AG04450 (cell line): ENCODE measurements at regions of chr16 and their contacts with region 1.

Region 1: GRCh38 chr16:57416122-57416509 is 11.5 kb downstream of the CCL17 start:
- DNase-seq: no peak
- H3K4me3 ChIP-seq: no peak overlapping the region
- H3K27ac ChIP-seq: no peak overlapping the region
- H3K27me3 ChIP-seq: peaks cover 18% of the 10 kb centered on the region
- CTCF ChIP-seq: no peak

Region 2: DNA sequence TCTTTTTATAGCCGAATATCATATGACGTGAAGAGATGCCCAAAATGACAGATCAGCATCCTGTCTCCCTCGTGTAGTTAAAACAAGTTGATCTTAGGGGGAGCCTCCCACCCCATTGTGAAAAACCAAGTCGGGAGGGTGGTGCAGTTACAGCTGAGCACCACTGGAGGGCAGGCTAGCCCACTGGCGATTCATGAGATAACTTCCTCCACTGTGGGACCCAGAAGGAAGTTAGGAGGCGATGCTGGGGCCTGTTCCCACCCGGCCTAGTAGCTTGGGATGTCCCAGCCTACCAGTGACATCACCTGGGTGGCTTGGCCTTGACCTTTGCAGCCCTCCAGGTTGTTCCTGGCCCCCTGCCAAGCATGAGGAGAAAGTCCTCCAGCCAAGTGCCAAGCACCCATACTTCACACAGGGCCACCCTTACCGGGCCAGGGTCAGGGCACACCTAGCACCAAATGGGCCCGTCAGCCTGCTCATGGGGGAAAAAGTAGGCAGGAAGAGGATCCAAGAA is 331.8 kb before region 1 on chr16:
- CTCF ChIA-PET with region 1: interaction called, 12 read pairs
- POLR2A ChIA-PET with region 1: no interaction called
- DNase-seq: peak; percentile 32
- H3K4me3 ChIP-seq: no peak overlapping the region
- H3K27ac ChIP-seq: no peak overlapping the region
- H3K27me3 ChIP-seq: no peaks in the 10 kb centered on the region
- CTCF ChIP-seq: peak; percentile 99

Region 3: GRCh38 chr16:57289391-57290257 is 126.5 kb before region 1 on chr16:
- CTCF ChIA-PET with region 1: interaction called, 16 read pairs
- POLR2A ChIA-PET with region 1: no interaction called
- DNase-seq: no peak
- H3K4me3 ChIP-seq: no peak overlapping the region
- H3K27ac ChIP-seq: no peak overlapping the region
- H3K27me3 ChIP-seq: peaks cover 12% of the 10 kb centered on the region
- CTCF ChIP-seq: no peak

Region 4: GRCh38 chr16:57316390-57317017 is 99.6 kb before region 1 on chr16:
- CTCF ChIA-PET with region 1: interaction called, 12 read pairs
- POLR2A ChIA-PET with region 1: no interaction called
- DNase-seq: peak; percentile 41
- H3K4me3 ChIP-seq: no peak overlapping the region
- H3K27ac ChIP-seq: peak overlapping the region; percentile 57
- H3K27me3 ChIP-seq: peaks cover 22% of the 10 kb centered on the region
- CTCF ChIP-seq: no peak

Region 5: DNA sequence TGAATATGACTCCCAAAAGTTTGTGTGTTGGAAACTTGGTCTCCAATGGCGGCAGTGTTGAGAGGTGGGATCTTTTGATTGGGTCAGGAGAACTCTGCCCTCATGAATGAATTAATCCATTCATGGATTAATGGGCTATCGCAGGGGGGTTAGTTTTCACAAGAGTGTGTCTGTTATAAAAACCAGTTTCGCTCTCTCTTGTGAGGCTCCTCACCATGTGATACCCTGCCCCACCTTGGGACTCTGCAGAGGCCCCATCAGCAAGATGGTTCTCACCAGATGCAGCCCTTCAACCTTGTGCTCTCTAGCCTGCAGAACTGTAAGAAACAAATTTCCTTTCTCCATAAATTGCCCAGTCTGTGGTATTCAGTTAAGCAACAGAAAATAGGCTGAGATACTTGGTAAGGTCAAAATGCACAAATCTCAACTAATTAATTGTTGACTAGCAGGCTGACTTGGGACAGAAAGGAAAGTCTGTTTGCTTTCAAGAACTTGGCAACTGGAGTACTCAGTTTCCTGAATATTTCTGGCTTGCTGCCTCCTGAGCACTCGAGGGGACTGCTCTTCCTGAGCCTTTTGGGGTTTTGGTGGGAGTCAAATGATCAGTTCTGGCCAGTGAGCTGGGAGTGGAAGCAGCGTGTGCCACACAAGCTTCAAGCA is 25.4 kb before region 1 on chr16:
- CTCF ChIA-PET with region 1: interaction called, 11 read pairs
- POLR2A ChIA-PET with region 1: no interaction called
- DNase-seq: no peak
- H3K4me3 ChIP-seq: no peak overlapping the region
- H3K27ac ChIP-seq: no peak overlapping the region
- H3K27me3 ChIP-seq: peaks cover 36% of the 10 kb centered on the region
- CTCF ChIP-seq: no peak

Region 6: GRCh38 chr16:57447186-57447962 is 31.3 kb after region 1 on chr16 and contains the starts of genes CIAPIN1 and COQ9:
- CTCF ChIA-PET with region 1: interaction called, 11 read pairs
- POLR2A ChIA-PET with region 1: no interaction called
- DNase-seq: peak; percentile 77
- H3K4me3 ChIP-seq: peak within 1 kb of the TSS; percentile 92
- H3K27ac ChIP-seq: peak within 1 kb of the TSS; percentile 65
- H3K27me3 ChIP-seq: no peaks in the 10 kb centered on the region
- CTCF ChIP-seq: no peak
- polyA plus RNA-seq, gene CIAPIN1: 48.6 and 49.7 TPM in 2 replicates
- polyA plus RNA-seq, gene COQ9: 59.0 and 60.3 TPM in 2 replicates

Region 7: DNA sequence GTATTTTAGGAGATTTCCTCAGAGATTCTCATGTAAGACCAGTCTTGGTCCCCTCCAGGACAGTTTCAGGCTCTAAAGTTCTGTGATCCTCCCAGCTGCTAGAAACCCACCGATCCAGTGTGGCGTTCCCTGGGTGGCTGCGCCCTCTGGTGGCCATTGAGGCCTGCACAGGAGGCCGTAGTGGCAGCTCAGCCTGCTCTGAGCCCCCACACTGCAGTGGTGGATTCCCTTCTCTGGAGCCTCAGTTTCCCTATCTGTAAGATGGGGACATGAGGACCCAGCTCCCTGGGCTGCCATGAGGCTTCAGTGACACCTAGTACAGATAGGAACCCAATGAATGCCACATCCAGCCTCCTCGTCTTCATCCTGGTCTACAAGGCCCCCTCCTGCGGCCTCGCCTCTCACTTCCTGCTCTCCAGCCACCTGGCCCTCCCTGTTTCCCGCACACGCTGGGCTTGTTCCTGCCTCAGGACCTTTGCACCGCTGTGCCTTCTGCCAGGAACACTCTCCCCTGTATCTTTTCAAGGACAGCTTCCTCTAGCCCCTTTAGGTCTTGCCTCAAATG is 103.8 kb after region 1 on chr16:
- CTCF ChIA-PET with region 1: interaction called, 63 read pairs
- POLR2A ChIA-PET with region 1: no interaction called
- DNase-seq: no peak
- H3K4me3 ChIP-seq: no peak overlapping the region
- H3K27ac ChIP-seq: no peak overlapping the region
- H3K27me3 ChIP-seq: no peaks in the 10 kb centered on the region
- CTCF ChIP-seq: peak; percentile 99